ENCODE measurements at regions of chr11 and their contacts with region 1.

Region 1: DNA sequence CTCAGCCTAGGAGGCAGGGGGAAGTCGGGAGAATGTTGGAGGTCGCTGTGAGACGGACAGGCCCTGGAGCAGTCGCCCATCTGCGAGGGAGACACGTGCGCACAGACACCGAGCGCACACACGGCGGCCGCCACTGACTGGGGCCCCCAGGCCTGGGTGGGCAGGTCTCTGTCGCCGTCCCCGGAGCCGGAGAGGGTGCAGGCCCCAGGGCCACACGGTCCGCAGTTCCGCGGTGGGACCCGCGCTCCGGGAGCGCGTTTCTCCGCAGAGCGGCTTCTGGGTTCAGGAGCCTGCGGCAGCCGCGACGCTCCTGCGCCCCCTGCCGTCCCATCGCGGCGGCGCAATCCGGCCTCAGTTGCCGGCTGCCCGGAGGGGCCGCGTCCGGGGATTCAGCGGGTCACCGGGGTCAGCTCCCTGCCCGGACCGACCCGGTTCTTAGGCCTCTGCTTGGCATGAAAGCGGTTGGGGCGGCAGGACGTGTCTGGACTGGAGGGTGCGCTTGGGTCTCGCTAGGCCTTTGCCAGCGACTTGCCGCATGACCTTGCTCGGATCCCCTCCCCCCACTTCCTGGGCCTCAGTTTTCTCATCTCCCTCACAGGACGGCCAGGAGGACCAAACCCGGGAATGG is 31.2 kb downstream of the PDE2A start:
- DNase-seq: peak; percentile 92
- H3K4me3 ChIP-seq: peak overlapping the region; percentile 42 to 61
- H3K27ac ChIP-seq: no peak overlapping the region
- H3K4me1 ChIP-seq: peaks cover 5 to 16% of the 10 kb centered on the region in 2 experiments; a peak in 1 of 4 replicates
- H3K27me3 ChIP-seq: peaks cover 30% of the 10 kb centered on the region
- CTCF ChIP-seq: peak; percentile 76
- EP300 ChIP-seq: no peak
- RAD21 ChIP-seq: peak; percentile 85

Region 2: GRCh38 chr11:72245263-72245816 is 397.7 kb before region 1 on chr11:
- CTCF ChIA-PET with region 1: no interaction called
- POLR2A ChIA-PET with region 1: no interaction called
- DNase-seq: no peak
- H3K4me3 ChIP-seq: peak overlapping the region in 1 of 2 experiments; percentile 83; a peak in 1 of 4 replicates
- H3K27ac ChIP-seq: peak overlapping the region in 1 of 2 experiments; percentile 79; a peak in 2 of 4 replicates
- H3K4me1 ChIP-seq: peaks cover 4 to 10% of the 10 kb centered on the region in 2 experiments; a peak in 1 of 4 replicates
- H3K27me3 ChIP-seq: no peaks in the 10 kb centered on the region; the same call in 1 of the 2 replicates
- CTCF ChIP-seq: no peak
- EP300 ChIP-seq: no peak
- RAD21 ChIP-seq: no peak

Region 3: GRCh38 chr11:72585762-72586311 is 57.2 kb before region 1 on chr11:
- CTCF ChIA-PET with region 1: interaction called, 151 read pairs
- POLR2A ChIA-PET with region 1: no interaction called
- DNase-seq: peak; percentile 89
- H3K4me3 ChIP-seq: no peak overlapping the region
- H3K27ac ChIP-seq: no peak overlapping the region
- H3K4me1 ChIP-seq: no peaks in the 10 kb centered on the region; a peak in 1 of 4 replicates
- H3K27me3 ChIP-seq: peaks cover 20% of the 10 kb centered on the region
- CTCF ChIP-seq: peak; percentile 90
- EP300 ChIP-seq: no peak
- RAD21 ChIP-seq: peak; percentile 87

Region 4: GRCh38 chr11:72625691-72626413 is 17.1 kb before region 1 on chr11:
- CTCF ChIA-PET with region 1: interaction called, 29 read pairs
- POLR2A ChIA-PET with region 1: interaction called, 11 read pairs
- DNase-seq: peak; percentile 84
- H3K4me3 ChIP-seq: no peak overlapping the region
- H3K27ac ChIP-seq: peak overlapping the region in 1 of 2 experiments; percentile 85; a peak in 2 of 4 replicates
- H3K4me1 ChIP-seq: peaks cover 0 to 69% of the 10 kb centered on the region in 2 experiments; a peak in 2 of 4 replicates
- H3K27me3 ChIP-seq: peaks cover 12% of the 10 kb centered on the region; the same call in 1 of the 2 replicates
- CTCF ChIP-seq: no peak
- EP300 ChIP-seq: peak in 1 of 2 experiments; percentile 42; a peak in 1 of 4 replicates
- RAD21 ChIP-seq: no peak

Region 5: DNA sequence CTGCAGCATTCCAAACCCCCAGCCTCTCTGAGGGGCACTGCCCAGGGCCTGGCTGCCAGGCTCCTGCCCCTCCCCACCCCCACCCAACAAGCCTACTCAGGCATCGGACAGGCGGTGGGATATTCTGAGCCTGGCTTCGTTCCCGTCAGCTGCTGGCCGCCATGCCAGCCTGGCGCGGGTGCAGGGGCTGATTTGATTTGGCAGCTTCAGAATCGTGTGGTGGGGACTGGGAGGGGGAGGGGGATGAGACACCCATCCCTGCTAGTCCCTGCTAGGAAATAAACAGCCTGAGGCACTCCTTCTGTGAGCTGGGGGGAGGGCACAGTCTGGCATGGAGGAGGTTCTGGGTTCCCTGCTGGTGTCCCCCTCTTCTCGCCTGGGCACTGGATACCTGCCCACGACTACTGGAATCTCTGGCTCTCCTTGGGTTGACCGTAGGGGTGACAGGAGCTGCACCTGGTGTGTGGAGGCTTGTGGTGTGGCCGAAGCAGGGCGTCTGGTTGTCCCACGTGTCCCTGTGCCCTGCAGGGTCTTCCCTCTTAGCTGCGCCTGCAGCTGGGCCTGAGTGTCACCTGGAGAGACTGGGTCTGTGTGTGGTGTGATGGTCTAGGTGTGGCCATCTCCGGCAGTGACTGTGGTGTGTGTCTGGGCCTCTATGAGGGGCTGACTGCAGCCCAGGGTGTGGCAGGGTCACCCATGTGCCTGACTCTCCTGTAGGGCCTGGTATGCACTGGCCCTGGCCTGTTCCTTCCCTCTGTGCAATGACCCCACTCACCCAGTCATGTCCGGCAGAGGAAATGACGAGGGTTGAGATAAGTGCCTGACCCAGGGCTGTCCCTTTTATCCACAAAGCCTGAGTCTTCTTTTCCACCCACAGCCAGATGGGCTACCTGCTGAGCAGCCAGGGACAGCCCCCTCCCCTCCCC is 10.9 kb before region 1 on chr11:
- CTCF ChIA-PET with region 1: interaction called, 29 read pairs
- POLR2A ChIA-PET with region 1: interaction called, 3 read pairs
- DNase-seq: peak; percentile 80
- H3K4me3 ChIP-seq: no peak overlapping the region
- H3K27ac ChIP-seq: peak overlapping the region in 1 of 2 experiments; percentile 88; a peak in 2 of 4 replicates
- H3K4me1 ChIP-seq: peaks cover 0 to 94% of the 10 kb centered on the region in 2 experiments; a peak in 2 of 4 replicates
- H3K27me3 ChIP-seq: no peaks in the 10 kb centered on the region; the same call in 1 of the 2 replicates
- CTCF ChIP-seq: no peak
- EP300 ChIP-seq: peak in 1 of 2 experiments; percentile 56; a peak in 1 of 4 replicates
- RAD21 ChIP-seq: peak; percentile 3; the same call in 1 of the 2 replicates

Region 6: GRCh38 chr11:72652873-72653630 is 10.1 kb after region 1 on chr11:
- CTCF ChIA-PET with region 1: interaction called, 38 read pairs
- POLR2A ChIA-PET with region 1: no interaction called
- DNase-seq: peak; percentile 63
- H3K4me3 ChIP-seq: no peak overlapping the region
- H3K27ac ChIP-seq: no peak overlapping the region
- H3K4me1 ChIP-seq: peaks cover 0 to 43% of the 10 kb centered on the region in 2 experiments; a peak in 1 of 4 replicates
- H3K27me3 ChIP-seq: no peaks in the 10 kb centered on the region; the same call in 1 of the 2 replicates
- CTCF ChIP-seq: no peak
- EP300 ChIP-seq: no peak
- RAD21 ChIP-seq: no peak